ENCODE measurements at regions of chr3 and their contacts with region 1.

Region 1: DNA sequence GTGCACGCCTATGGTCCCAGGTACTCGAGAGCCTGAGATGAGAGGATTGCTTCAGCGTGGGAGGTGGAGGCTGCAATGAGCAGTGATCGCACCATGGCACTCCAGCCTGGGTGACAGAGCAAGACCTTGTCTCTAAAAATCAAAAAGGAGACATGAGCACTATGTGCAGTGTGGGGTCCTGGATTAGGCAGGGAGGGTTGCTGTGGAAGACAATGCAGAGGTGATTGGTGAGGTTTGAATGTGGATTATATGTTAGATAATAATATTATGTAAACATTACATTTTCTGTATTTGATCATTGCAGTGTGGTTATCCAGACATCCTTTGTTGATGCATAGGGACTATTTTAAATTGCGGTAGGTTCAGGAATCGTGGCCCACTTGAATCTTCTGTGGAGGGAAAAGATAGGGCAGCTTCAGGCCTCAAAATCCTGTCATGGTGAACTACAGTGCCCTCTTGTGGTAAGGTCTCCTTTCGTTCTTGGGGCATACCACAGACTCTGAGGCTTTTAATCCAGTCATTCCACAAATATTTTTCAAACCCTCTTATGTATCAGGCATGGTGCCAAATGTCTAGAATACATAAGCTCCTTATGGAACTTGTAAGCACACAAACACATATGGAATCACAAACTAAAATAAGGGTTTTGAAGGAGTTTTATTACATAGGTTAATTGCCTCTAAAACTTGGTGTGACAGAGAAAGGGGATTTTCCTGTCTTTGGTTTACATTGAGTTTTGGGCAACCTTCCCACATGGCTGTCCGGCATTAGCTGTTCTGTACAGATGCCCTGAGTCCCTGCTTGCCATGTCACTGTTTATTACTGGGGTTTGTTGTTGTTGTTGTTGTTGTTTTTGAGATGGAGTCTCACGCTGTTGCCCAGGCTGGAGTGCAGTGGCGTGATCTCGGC is 37.7 kb downstream of the GPD1L start:
- DNase-seq: peak; percentile 57 to 76
- H3K4me3 ChIP-seq: no peak overlapping the region
- H3K4me3 Mint-ChIP-seq: no peak overlapping the region
- H3K27ac Mint-ChIP-seq: no peak overlapping the region
- H3K4me1 ChIP-seq: peaks cover 23% of the 10 kb centered on the region
- H3K4me1 Mint-ChIP-seq: peaks cover 17% of the 10 kb centered on the region
- H3K27me3 ChIP-seq: no peaks in the 10 kb centered on the region
- H3K27me3 Mint-ChIP-seq: no peaks in the 10 kb centered on the region
- CTCF ChIP-seq: peak; percentile 56 to 64

Region 2: GRCh38 chr3:31981206-31982181 is 162.6 kb before region 1 on chr3 and contains the starts of genes OSBPL10 and ZNF860:
- CTCF ChIA-PET with region 1: no interaction called
- POLR2A ChIA-PET with region 1: no interaction called
- intact Hi-C with region 1: no loop called
- DNase-seq: peak; percentile 84 to 89
- H3K4me3 ChIP-seq: peak within 1 kb of the TSS; percentile 62
- H3K4me3 Mint-ChIP-seq: peak within 1 kb of the TSS; percentile 93
- H3K27ac Mint-ChIP-seq: peak within 1 kb of the TSS; percentile 88
- H3K4me1 ChIP-seq: peaks cover 28% of the 10 kb centered on the region
- H3K4me1 Mint-ChIP-seq: peaks cover 23% of the 10 kb centered on the region
- H3K27me3 ChIP-seq: no peaks in the 10 kb centered on the region
- H3K27me3 Mint-ChIP-seq: no peaks in the 10 kb centered on the region
- CTCF ChIP-seq: no peak
- total RNA-seq, gene OSBPL10: 71.2 and 79.5 TPM in 2 replicates
- total RNA-seq, gene ZNF860: 4.7 and 5.9 TPM in 2 replicates

Region 3: GRCh38 chr3:32018757-32019564 is 125.1 kb before region 1 on chr3:
- CTCF ChIA-PET with region 1: interaction called, 3 read pairs
- POLR2A ChIA-PET with region 1: no interaction called
- intact Hi-C with region 1: loop called (anchors 1 kb)
- DNase-seq: peak in 1 of 2 experiments; percentile 43
- H3K4me3 ChIP-seq: no peak overlapping the region
- H3K4me3 Mint-ChIP-seq: peak overlapping the region; percentile 6
- H3K27ac Mint-ChIP-seq: peak overlapping the region; percentile 20
- H3K4me1 ChIP-seq: peaks cover 6% of the 10 kb centered on the region; the same call in 1 of the 2 replicates
- H3K4me1 Mint-ChIP-seq: peaks cover 11% of the 10 kb centered on the region
- H3K27me3 ChIP-seq: no peaks in the 10 kb centered on the region
- H3K27me3 Mint-ChIP-seq: no peaks in the 10 kb centered on the region
- CTCF ChIP-seq: peak; percentile 60 to 66

Region 4: DNA sequence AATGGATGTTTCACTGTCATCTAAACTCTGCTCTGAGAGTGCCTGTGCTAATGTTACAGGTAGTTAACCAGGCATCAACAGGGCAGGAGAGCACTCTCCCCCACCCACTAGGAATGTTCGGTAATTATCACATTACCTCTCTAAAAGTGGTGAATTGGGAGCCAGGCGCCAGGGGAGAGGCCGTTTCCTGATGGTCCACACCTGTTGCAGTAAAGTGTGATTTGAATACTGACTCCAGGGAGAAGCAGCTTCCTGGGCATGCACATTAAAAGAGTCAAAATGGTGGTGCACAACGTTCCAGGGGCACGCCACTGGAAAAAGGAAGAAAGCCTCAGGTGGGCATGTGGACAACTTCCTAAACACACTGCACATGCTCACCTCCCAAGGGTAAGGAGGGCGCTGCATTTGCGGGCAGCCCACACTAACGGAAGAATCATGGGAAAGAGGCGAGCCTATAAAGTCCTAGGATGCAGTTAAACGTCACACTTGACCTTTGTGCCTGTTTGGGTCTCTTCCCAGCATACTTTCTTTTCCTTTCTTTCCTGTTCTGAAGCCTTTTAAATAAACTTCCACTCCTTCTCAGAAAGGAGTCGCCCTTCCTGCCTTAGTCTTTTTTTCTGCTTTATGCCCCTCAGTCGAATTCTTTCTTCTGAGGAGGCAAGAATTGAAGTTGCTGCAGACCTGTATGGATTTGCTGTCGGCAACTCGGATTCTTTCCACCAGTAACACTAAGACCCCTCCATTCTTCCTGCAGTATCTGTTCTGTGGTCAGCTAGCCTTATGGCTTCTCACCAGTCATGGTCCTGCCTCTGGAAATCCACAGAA is 66.6 kb before region 1 on chr3:
- CTCF ChIA-PET with region 1: no interaction called
- POLR2A ChIA-PET with region 1: no interaction called
- intact Hi-C with region 1: loop called (anchors 1 kb)
- DNase-seq: peak; percentile 46 to 64
- H3K4me3 ChIP-seq: peak overlapping the region; percentile 33
- H3K4me3 Mint-ChIP-seq: peak overlapping the region; percentile 71
- H3K27ac Mint-ChIP-seq: peak overlapping the region; percentile 71
- H3K4me1 ChIP-seq: peaks cover 14% of the 10 kb centered on the region
- H3K4me1 Mint-ChIP-seq: peaks cover 10% of the 10 kb centered on the region
- H3K27me3 ChIP-seq: no peaks in the 10 kb centered on the region
- H3K27me3 Mint-ChIP-seq: no peaks in the 10 kb centered on the region
- CTCF ChIP-seq: peak in 1 of 2 experiments; percentile 11

Region 5: GRCh38 chr3:32106280-32106928 is 37.7 kb before region 1 on chr3 and contains the start of gene GPD1L:
- CTCF ChIA-PET with region 1: interaction called, 3 read pairs
- POLR2A ChIA-PET with region 1: no interaction called
- intact Hi-C with region 1: loop called (anchors 5 kb)
- DNase-seq: peak; percentile 94 to 96
- H3K4me3 ChIP-seq: peak within 1 kb of the TSS; percentile 73
- H3K4me3 Mint-ChIP-seq: peak within 1 kb of the TSS; percentile 82
- H3K27ac Mint-ChIP-seq: no peak within 1 kb of the TSS
- H3K4me1 ChIP-seq: peaks cover 15% of the 10 kb centered on the region
- H3K4me1 Mint-ChIP-seq: peaks cover 13% of the 10 kb centered on the region
- H3K27me3 ChIP-seq: no peaks in the 10 kb centered on the region
- H3K27me3 Mint-ChIP-seq: no peaks in the 10 kb centered on the region
- CTCF ChIP-seq: no peak
- total RNA-seq, gene GPD1L: 8.8 and 9.3 TPM in 2 replicates

Region 6: GRCh38 chr3:32117324-32117723 is 26.8 kb before region 1 on chr3:
- CTCF ChIA-PET with region 1: no interaction called
- POLR2A ChIA-PET with region 1: no interaction called
- intact Hi-C with region 1: loop called (anchors 2 kb)
- DNase-seq: peak in 1 of 2 experiments; percentile 20
- H3K4me3 ChIP-seq: no peak overlapping the region
- H3K4me3 Mint-ChIP-seq: peak overlapping the region; percentile 18
- H3K27ac Mint-ChIP-seq: no peak overlapping the region
- H3K4me1 ChIP-seq: peaks cover 4% of the 10 kb centered on the region; the same call in 1 of the 2 replicates
- H3K4me1 Mint-ChIP-seq: peaks cover 24% of the 10 kb centered on the region
- H3K27me3 ChIP-seq: no peaks in the 10 kb centered on the region
- H3K27me3 Mint-ChIP-seq: no peaks in the 10 kb centered on the region
- CTCF ChIP-seq: no peak